Mammary epithelial cell (primary cell): ENCODE measurements at regions of chr1 and their contacts with region 1.

Region 1: GRCh38 chr1:78176448-78176847 is 130.7 kb downstream of the GIPC2 start:
- DNase-seq: peak; percentile 85
- H3K4me3 ChIP-seq: no peak overlapping the region
- H3K27ac ChIP-seq: no peak overlapping the region
- H3K4me1 ChIP-seq: peaks cover 22% of the 10 kb centered on the region
- H3K27me3 ChIP-seq: no peaks in the 10 kb centered on the region
- CTCF ChIP-seq: no peak

Region 2: GRCh38 chr1:78303620-78304019 is 127.2 kb after region 1 on chr1:
- CTCF ChIA-PET with region 1: interaction called, 17 read pairs
- dilution Hi-C with region 1: no loop called
- in situ Hi-C with region 1: no loop called
- intact Hi-C with region 1: no loop called
- DNase-seq: peak; percentile 92
- H3K4me3 ChIP-seq: no peak overlapping the region
- H3K27ac ChIP-seq: peak overlapping the region; percentile 2
- H3K4me1 ChIP-seq: peaks cover 18% of the 10 kb centered on the region
- H3K27me3 ChIP-seq: no peaks in the 10 kb centered on the region
- CTCF ChIP-seq: no peak

Region 3: GRCh38 chr1:78385744-78386462 is 209.5 kb after region 1 on chr1:
- CTCF ChIA-PET with region 1: no interaction called
- dilution Hi-C with region 1: loop called (anchors 10 kb)
- in situ Hi-C with region 1: no loop called
- intact Hi-C with region 1: no loop called
- DNase-seq: no peak
- H3K4me3 ChIP-seq: no peak overlapping the region
- H3K27ac ChIP-seq: no peak overlapping the region
- H3K4me1 ChIP-seq: no peaks in the 10 kb centered on the region
- H3K27me3 ChIP-seq: peaks cover 5% of the 10 kb centered on the region
- CTCF ChIP-seq: no peak